ENCODE measurements at regions of chr15 and their contacts with region 1.

Region 1: GRCh38 chr15:50876989-50877360 is 31.5 kb upstream of the AP4E1 start:
- DNase-seq: no peak

Region 2: GRCh38 chr15:50675536-50676144 is 201.3 kb before region 1 on chr15:
- intact Hi-C with region 1: loop called (anchors 5 kb)
- DNase-seq: no peak

Region 3: GRCh38 chr15:50681467-50681866 is 195.5 kb before region 1 on chr15:
- intact Hi-C with region 1: loop called (anchors 5 kb)
- DNase-seq: no peak

Region 4: DNA sequence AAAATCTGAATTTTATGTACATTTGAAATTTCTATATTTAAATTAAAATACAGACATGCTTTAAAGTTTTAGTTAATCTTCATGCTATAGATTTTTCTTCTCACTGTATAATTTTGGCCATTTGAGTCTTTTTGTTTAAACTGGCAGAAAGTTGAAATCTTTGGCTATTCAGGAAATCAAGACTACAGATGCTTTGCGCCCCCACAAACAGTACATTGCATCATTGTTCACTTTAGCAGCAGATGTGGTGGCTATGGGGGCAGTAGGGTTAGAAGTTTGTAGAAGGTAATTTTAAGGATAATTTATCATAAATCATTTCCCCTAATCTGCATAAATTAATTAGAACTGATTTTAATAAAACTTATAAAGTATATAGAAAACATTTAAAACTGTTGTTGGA is 132.4 kb before region 1 on chr15:
- intact Hi-C with region 1: loop called in 1 of 2 experiments (anchors 10 kb)
- DNase-seq: no peak

Region 5: DNA sequence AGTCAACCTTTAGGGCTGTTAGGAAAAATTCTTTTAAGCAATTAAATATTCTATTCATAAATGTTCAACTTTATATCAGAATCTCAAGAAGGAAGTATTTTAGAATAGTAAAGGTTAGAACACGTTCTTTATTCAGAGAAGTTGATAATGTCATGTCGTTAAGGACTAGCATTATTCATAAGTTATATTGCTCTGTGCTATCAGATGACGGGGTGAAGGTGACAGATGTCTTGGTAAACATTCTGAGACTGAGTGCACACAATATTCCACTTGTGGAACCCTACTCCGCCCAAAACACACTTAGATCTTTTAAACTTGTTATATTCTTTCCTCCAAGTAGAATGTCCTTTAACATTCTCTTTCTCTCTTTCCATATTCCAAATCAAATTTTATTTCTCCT is 39.4 kb after region 1 on chr15:
- intact Hi-C with region 1: no loop called
- DNase-seq: no peak

Measured in posterior vena cava (tissue), 2 donors.